ENCODE measurements at regions of chr1 and their contacts with region 1.

Region 1: GRCh38 chr1:8727809-8728213 is 89.6 kb downstream of the RERE start:
- DNase-seq: no peak
- ATAC-seq: no peak
- H3K4me3 ChIP-seq: no peak overlapping the region
- H3K4me3 Mint-ChIP-seq: no peak overlapping the region
- H3K27ac ChIP-seq: no peak overlapping the region
- H3K27ac Mint-ChIP-seq: no peak overlapping the region
- H3K4me1 ChIP-seq: no peaks in the 10 kb centered on the region
- H3K4me1 Mint-ChIP-seq: peaks cover 19% of the 10 kb centered on the region
- H3K27me3 ChIP-seq: no peaks in the 10 kb centered on the region
- H3K27me3 Mint-ChIP-seq: no peaks in the 10 kb centered on the region
- CTCF ChIP-seq: no peak

Region 2: DNA sequence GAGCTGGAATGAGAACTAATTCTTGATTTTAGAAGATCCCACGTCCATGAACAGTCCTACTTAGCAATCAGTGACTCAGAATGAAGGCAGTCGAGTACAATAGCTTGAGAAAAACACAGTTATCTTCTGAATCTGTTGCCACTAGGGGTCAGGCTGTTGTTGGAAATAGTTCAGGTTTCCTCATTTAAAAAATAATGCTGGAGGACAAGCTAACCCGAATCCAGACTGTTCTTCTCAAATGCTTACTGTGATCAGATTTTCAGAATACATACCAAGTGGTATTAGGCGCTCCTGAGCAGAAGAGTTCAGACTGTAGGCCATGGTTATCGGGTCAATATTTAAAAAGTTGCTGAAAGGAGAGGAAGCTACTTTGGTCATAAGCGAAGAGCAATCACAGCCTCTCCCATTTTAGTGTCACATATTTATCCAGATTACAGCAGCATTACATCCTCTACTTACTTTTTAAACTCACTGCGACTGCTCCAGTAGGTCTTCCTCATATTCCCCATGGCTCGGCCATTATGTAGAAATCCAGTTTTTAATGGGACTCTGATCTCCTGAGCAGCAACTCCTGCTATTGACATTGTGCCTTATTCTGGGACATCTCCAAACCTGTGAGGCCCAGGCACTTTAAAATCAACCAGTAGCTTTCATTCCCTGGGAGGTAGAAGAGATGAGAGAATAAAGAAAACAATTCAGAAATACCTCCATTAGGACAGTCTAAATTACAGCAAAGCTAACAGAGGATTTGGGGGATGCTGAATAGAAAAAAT is 712.6 kb before region 1 on chr1:
- CTCF ChIA-PET with region 1: no interaction called
- POLR2A ChIA-PET with region 1: no interaction called
- intact Hi-C with region 1: loop called in 1 of 2 experiments (anchors 10 kb)
- DNase-seq: peak in 8 of 14 experiments; percentile 15 to 76 (median 44)
- ATAC-seq: peak; percentile 70
- H3K4me3 ChIP-seq: no peak overlapping the region
- H3K4me3 Mint-ChIP-seq: no peak overlapping the region
- H3K27ac ChIP-seq: no peak overlapping the region
- H3K27ac Mint-ChIP-seq: no peak overlapping the region
- H3K4me1 ChIP-seq: no peaks in the 10 kb centered on the region
- H3K4me1 Mint-ChIP-seq: no peaks in the 10 kb centered on the region
- H3K27me3 ChIP-seq: peaks cover 4 to 16% of the 10 kb centered on the region in 2 experiments
- H3K27me3 Mint-ChIP-seq: peaks cover 36% of the 10 kb centered on the region
- CTCF ChIP-seq: peak; percentile 73

Region 3: GRCh38 chr1:8706995-8707396 is 20.8 kb before region 1 on chr1:
- CTCF ChIA-PET with region 1: no interaction called
- POLR2A ChIA-PET with region 1: no interaction called
- intact Hi-C with region 1: no loop called
- DNase-seq: no peak
- ATAC-seq: no peak
- H3K4me3 ChIP-seq: no peak overlapping the region
- H3K4me3 Mint-ChIP-seq: no peak overlapping the region
- H3K27ac ChIP-seq: no peak overlapping the region
- H3K27ac Mint-ChIP-seq: no peak overlapping the region
- H3K4me1 ChIP-seq: peaks cover 12% of the 10 kb centered on the region
- H3K4me1 Mint-ChIP-seq: peaks cover 17% of the 10 kb centered on the region
- H3K27me3 ChIP-seq: peaks cover 21 to 31% of the 10 kb centered on the region in 2 experiments
- H3K27me3 Mint-ChIP-seq: peaks cover 52% of the 10 kb centered on the region
- CTCF ChIP-seq: no peak

Measured in CD4-positive, alpha-beta T cell (primary cell).